Right ventricle myocardium superior (tissue), 1 donor: ENCODE measurements at regions of chr6 and their contacts with region 1.

Region 1: GRCh38 chr6:56693246-56693607 is 50.5 kb upstream of the DST start:
- DNase-seq: peak; percentile 96
- ATAC-seq: peak; percentile 86

Region 2: GRCh38 chr6:56649053-56649769 is 44.0 kb before region 1 on chr6:
- intact Hi-C with region 1: loop called (anchors 5 kb)
- DNase-seq: no peak
- ATAC-seq: no peak